Right ventricle myocardium superior (tissue), 1 donor: ENCODE measurements at regions of chr5 and their contacts with region 1.

Region 1: DNA sequence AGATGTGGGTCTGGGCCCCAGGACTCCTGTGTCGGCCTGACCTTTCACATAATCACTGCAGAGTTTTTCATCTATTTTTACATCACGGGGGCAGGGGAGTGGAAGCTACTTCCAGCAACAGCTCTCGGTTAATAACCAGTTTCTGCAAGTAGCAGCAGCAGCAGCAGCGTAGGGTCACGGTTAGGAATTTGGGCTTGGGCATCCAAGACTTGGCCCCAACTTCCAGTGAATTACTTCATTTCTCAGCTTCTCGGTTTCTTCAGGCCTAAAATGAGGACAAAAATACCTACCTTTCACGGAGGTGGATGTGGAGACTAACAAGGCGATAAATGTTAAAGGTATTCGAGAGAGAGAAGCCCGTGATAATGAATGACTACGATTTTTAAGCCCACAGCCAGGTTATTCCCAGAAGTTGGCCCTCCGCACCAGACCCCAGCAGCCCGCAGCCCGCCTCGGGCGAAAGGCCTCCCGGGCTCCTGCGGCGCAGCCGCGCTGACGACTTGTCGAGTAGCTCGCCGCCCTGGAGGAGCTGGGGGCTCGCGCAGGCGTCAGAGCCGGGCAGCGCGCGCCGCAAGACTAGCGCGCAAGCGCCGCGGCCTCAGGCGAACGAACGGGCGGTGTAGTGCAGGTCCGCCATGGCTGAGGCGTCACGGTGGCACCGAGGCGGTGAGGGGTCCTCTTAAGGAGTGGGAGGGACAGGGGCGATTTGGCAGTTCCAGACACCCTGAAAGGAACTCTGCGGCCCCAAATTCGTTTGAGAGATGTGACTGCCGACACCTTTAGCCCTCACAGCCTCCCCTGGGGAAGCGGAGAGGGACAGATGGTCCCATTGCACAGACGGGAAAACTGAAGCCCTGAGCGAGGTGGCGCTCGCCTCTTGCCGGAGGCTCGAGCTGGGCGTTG is at the start of gene PKD2L2:
- DNase-seq: peak; percentile 94
- ATAC-seq: peak; percentile 95
- total RNA-seq, gene PKD2L2: 0.48 TPM

Region 2: DNA sequence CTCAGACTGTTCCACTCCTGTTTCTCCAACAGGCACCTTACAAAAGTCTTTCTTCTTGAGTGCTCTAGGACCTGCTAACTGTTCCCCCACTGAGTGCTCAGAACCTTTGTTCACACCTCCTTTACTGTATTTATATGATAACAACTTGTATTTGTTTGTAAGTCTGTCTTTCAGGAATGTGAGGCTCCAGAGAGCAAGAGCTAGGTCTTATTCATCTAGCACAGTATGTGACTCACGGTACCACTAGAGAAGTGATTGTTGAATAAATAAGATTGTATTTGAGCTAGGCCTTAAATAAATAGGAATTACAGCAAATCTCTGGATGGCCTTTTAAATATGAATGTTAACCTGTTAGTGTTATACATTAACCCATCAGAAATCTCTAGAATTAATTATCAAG is 63.9 kb before region 1 on chr5:
- intact Hi-C with region 1: loop called (anchors 5 kb)
- DNase-seq: no peak
- ATAC-seq: no peak

Region 3: GRCh38 chr5:137997726-137998213 is 108.7 kb after region 1 on chr5:
- intact Hi-C with region 1: no loop called
- DNase-seq: no peak
- ATAC-seq: no peak

Region 4: DNA sequence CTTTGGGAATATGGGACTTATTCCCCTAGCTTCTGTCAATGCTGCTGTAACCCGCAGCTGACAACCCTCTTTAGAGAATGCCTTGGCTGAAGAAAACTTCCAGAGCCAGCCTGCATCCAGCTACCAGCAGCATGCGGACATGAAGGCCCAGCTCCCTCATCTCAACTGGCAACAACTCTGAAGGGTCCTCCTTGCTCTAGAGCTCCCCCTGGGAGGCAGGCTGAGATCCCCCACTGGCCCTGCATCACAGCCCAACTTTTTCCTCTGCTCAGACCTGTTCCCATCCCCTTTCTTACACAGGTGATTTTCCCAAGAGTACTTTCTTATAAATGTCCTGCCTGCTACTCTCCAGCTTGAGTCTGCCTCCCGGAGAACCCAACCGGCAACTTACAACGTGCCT is 176.0 kb after region 1 on chr5:
- intact Hi-C with region 1: no loop called
- DNase-seq: no peak
- ATAC-seq: no peak